ENCODE measurements at regions of chr12 and their contacts with region 1.

Region 1: DNA sequence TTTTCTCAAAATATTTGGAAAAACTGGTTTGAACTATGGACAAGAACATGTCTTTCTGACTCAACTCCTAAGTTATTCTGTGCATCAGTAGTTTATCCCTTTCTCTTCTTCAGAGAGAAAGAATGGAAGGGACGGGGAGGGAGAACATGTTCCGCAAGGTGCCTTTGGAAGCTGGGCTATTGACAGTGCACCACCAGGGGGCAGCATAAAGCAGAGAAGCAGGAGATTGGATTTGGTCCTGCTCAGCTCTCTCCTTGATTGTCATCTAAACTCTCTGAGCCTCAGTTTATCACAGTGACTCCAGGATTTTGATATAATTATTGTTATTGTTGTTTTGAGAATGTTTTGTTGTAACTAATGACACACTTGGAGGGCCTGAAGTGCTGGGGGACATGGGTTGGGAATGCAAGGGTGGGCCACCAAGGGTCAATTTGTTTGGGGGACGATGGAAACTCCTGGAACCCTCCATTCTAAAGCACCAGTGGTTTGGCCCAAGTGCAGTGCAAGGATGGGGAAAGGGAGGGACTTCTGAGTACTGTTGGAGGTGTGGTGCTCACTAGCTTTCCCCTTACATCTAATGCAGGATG is 45.3 kb upstream of the ANO6 start:
- DNase-seq: peak; percentile 92
- H3K4me3 Mint-ChIP-seq: no peak overlapping the region
- H3K27ac Mint-ChIP-seq: no peak overlapping the region
- H3K4me1 Mint-ChIP-seq: no peaks in the 10 kb centered on the region
- H3K27me3 Mint-ChIP-seq: peaks cover 4% of the 10 kb centered on the region

Region 2: GRCh38 chr12:45388545-45388944 is 218.0 kb after region 1 on chr12:
- intact Hi-C with region 1: loop called (anchors 2 kb)
- DNase-seq: no peak
- H3K4me3 Mint-ChIP-seq: no peak overlapping the region
- H3K27ac Mint-ChIP-seq: no peak overlapping the region
- H3K4me1 Mint-ChIP-seq: no peaks in the 10 kb centered on the region
- H3K27me3 Mint-ChIP-seq: no peaks in the 10 kb centered on the region

Measured in activated CD4-positive, alpha-beta T cell treated with anti-CD3 and anti-CD28 coated beads, Interleukin-2, amount 10 ng/mL, durations not matched to agents 24 days and 14 days (primary cell).